HEK293T (cell line): ENCODE measurements at regions of chr19 and their contacts with region 1.

Region 1: GRCh38 chr19:38618590-38619360 is at the start of gene EIF3K:
- DNase-seq: peak; percentile 99

Region 2: DNA sequence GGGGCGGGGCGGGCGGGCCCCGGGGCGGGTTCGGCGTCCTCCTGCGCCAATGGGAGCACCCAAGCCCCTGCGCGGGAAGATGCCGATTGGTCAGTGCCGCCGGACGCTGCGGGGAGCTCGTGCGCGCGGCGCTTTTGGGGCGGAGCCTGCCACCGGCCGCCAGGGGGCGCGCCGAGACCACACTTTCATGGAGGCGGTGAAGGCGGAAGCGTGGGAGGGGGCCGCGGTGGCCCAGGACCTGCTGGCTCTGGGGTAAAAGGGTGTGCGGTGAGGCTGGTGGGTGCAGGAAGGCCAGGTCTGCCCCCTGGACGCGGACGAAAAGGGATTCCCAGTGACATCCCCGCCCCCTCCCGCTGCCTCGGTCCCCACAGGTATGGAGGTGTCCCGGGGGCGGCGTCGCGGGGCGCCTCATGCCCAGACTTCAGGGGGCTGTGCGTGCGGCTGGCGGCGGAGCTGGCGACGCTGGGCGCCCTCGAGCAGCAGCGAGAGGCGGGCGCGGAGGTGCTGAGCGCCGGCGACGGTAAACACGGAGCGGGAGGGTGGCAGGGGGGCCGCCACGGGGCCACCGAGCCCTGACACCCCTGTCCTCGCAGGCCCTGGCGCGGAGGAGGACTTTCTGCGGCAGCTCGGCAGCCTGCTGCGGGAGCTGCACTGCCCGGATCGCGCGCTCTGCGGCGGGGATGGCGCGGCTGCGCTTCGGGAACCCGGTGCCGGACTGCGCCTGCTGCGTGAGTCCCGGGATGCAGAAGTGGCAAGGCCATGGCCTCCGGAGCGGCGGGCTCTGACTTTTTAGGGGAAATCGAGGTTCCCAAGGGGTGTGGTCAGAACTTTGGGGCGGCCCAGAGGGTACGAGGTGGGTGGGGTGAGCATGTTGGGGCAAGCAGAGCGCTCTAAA is 215.6 kb before region 1 on chr19 and contains the start of gene FAM98C:
- CTCF ChIA-PET with region 1: interaction called, 3 read pairs
- POLR2A ChIA-PET with region 1: interaction called, 18 read pairs
- DNase-seq: peak; percentile 99

Region 3: DNA sequence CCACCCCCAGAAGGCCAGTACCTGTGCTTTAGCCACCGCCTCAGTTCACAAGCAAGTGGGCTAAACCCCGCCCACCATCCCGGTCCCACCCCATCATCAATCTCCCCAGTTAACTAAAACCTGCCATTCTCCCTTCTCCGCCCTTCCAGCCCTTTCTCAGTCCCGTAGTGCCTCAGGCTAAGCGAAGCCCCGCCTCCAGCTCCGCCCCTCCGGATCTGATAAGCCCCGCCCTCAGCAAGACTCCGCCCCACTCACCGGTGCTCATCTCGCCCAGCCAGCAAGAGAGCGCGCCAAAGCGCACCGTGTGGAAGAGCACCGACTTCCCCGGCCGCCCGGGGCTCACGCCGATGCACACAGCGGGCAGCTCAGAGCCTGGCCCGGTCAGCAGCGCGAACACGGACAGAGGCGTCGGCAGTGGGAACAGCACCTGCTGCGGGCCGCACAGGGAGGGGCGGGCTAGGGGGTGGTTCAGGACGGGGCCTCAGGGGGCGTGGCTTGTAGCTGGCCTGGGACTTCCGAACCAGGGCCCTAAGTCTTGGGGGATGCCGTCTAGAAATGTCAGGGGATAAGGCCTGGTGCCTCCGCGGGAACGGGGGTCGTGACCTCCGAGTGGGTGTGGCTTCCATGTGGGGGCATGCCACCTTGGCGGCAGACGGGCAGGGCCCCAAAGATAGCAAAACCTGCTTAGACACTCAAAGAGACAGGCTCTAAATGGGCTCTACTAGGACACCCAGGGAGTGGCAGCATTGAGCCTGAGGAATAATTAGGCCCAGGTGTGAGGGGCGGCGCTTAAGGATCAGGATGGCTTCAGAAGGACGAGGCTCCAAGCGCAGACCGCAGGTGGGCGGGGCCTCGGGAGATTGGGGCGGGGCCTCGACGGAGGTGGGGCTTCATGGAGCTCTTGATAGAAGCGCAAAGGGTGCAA is 22.5 kb before region 1 on chr19:
- CTCF ChIA-PET with region 1: no interaction called
- POLR2A ChIA-PET with region 1: interaction called, 27 read pairs
- DNase-seq: peak; percentile 92

Region 4: DNA sequence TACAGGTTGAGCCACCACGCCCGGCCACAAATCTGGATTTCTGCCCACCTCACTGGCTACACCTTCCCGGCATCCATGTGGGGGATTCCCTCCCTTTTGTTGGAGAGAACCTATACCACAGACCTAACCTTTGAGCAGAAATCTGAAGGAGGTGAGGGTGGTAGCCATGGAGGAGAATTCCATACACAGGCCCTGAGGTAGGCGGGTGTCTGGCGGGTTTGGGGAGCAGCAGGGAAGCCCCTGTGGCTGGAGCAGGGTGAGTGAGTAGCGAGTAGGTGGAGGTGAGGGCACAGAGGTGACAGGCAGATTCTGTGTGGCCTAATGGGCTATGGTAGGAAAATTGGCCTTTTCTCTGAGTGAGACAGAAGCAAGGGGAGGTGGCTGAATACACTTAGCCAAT is 10.8 kb after region 1 on chr19:
- CTCF ChIA-PET with region 1: interaction called, 4 read pairs
- POLR2A ChIA-PET with region 1: interaction called, 10 read pairs
- DNase-seq: no peak

Region 5: DNA sequence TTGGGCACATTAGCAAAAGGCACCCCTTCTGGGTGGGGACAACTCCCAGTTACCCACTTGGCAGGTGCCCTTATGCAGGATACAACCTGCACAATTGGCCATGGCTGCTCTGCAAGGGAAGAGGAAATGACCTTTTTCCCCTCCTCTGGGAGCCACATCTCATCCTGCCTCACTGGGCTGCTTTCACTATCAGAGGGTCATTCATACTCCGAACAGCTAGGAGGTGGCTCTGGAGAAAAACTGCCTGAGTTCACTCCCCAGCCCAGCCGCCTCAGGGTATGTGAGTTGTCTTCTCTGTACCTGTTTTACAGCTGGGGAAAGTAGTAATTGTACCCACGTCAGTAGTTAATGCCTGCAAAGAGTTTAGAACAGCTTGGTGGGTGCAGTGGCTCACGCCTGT is 21.6 kb after region 1 on chr19:
- CTCF ChIA-PET with region 1: interaction called, 4 read pairs
- POLR2A ChIA-PET with region 1: interaction called, 13 read pairs
- DNase-seq: no peak

Region 6: GRCh38 chr19:38944981-38945506 is 326.3 kb after region 1 on chr19:
- CTCF ChIA-PET with region 1: no interaction called
- POLR2A ChIA-PET with region 1: no interaction called
- DNase-seq: no peak